ENCODE measurements at regions of chr1 and their contacts with region 1.

Region 1: DNA sequence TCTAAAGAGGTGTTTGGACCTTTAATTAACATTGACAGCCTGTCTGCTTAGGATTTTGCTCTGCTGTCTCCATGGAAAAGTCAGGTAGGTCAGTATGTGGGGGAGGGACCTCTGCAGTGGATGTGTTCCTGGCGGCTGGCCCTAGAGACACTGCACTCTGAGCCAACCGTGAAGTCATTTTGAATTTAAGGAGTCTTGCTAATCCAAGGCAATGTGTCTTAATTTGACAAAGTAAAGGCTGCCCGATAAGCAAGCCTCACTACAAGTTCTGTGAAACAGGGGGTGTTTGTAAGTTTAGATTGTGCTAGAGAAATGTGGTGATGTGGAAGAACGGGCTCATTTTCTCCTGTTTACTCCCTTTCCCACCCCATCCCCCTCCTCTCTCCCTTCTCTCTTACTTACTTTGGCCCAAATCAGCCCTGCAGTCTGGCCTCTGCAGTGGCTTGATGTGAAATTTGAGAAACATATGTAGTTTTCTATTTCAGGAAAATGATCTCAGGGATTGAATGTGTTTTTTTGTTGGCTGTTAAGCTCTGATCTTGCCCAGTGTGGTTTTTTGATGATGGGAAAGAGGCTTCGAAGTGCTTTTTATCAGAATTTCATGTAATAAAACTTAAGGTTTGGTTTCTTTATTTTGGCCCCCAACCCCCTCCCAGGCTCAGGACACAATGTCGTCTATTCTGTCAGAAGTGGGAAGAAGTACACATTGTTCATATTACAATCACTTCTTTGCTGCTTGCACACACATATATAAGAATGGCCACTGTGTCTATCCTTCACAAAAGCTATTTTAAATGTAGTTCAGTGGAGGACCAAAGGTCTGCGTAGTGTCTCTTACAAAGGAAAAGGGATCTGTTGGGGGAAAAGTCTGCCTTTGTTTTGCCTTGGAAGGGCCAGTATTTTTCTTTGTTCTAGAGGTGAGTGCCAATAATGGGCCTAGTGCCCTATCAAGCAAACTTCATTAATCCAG is 96.6 kb downstream of the FGGY start:
- DNase-seq: peak; percentile 85 to 89
- ATAC-seq: peak; percentile 95
- H3K4me3 ChIP-seq: no peak overlapping the region
- H3K27ac ChIP-seq: peak overlapping the region; percentile 93 to 100
- H3K4me1 ChIP-seq: peaks cover 6% of the 10 kb centered on the region in 2 donors
- H3K27me3 ChIP-seq: no peaks in the 10 kb centered on the region

Region 2: DNA sequence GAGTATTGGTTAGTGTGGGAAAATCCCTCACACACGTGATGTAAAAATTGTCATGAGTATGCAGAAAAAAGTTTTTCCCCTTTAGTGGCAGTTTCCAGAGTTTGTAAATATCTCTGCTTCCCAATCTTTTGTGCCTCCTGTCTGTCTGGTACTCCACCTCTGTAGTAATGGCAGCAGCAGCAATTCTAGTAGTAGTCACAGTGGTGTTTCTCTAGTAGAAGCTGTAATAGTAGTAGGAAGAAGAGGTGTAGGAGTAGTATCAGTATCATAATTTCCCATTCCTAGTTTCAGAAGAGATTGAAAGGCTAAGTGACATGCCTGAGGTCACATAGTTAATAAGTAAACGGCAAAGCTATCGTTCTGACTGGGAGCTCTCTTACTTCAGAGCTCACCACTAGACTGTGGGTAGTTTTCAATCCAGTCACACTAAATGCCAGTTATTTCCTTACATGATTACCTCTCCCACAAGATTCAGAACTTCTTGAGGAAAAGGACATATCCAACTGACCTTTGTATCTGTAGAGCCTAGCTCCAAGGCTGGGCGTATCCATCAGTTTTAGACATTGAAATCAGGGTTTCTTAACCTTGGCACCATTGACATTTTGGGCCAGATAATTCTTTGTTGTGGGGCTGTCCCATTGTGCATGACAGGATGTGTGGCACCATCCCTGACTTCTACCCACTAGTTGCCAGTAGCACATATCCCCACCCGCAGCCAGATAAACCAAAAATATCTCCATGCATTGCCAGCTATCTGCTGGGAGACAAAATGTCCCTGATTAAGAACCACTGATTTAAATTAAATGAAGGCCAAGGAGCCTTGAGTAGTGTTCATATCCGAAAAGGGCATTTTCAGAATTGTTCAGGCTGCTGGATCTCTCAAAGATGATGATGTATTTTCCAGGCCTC is 39.3 kb after region 1 on chr1:
- intact Hi-C with region 1: loop called in 1 of 2 experiments (anchors 1 kb)
- DNase-seq: no peak
- ATAC-seq: no peak
- H3K4me3 ChIP-seq: no peak overlapping the region
- H3K27ac ChIP-seq: peak overlapping the region; percentile 37 to 65
- H3K4me1 ChIP-seq: peaks cover 4 to 6% of the 10 kb centered on the region in 2 donors
- H3K27me3 ChIP-seq: no peaks in the 10 kb centered on the region

Measured in aorta (tissue), 5 donors.